GM13977 (cell line): ENCODE measurements at regions of chr6 and their contacts with region 1.

Region 1: GRCh38 chr6:32529697-32530429 is at the start of gene HLA-DRB5:
- DNase-seq: no peak
- CTCF ChIP-seq: no peak

Region 2: GRCh38 chr6:30686908-30687658 is 1842.8 kb before region 1 on chr6:
- in situ Hi-C with region 1: no loop called
- DNase-seq: peak; percentile 88
- CTCF ChIP-seq: no peak

Region 3: GRCh38 chr6:32472781-32473375 is 57.0 kb before region 1 on chr6:
- in situ Hi-C with region 1: loop called (anchors 10 kb)
- DNase-seq: no peak
- CTCF ChIP-seq: no peak

Region 4: DNA sequence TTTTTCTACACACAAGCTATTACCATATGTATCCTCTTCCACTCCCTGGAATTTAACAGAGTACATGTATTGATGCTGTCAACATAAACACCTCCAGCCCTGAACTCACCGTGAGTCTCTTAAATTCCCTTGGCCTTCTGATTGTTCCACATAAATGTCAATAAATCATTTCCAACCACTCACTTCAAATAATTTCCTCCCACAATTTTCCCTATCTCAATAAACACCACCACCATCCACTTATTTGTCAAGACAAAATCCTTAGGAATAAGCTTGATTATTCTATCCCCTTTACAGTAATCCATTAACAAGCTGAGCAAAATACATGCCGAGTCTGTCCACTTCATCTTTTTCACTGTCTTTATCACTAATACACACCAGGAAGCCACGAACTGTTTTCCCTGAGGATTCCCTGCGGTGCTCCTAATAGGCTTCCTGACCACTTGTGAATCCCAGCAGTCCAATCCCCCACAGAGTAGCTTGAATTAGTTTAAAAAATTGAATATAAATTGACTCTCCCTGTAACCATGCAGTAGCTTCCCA is 40.6 kb after region 1 on chr6:
- in situ Hi-C with region 1: loop called (anchors 5 kb)
- DNase-seq: no peak
- CTCF ChIP-seq: no peak